Pancreas (tissue), 10 donors: ENCODE measurements at regions of chr2 and their contacts with region 1.

Region 1: GRCh38 chr2:45224321-45224992 is 215.2 kb upstream of the SIX2 start:
- DNase-seq: no peak
- ATAC-seq: no peak
- H3K4me3 ChIP-seq: no peak overlapping the region
- H3K27ac ChIP-seq: no peak overlapping the region
- H3K4me1 ChIP-seq: no peaks in the 10 kb centered on the region
- H3K27me3 ChIP-seq: no peaks in the 10 kb centered on the region
- CTCF ChIP-seq: no peak

Region 2: DNA sequence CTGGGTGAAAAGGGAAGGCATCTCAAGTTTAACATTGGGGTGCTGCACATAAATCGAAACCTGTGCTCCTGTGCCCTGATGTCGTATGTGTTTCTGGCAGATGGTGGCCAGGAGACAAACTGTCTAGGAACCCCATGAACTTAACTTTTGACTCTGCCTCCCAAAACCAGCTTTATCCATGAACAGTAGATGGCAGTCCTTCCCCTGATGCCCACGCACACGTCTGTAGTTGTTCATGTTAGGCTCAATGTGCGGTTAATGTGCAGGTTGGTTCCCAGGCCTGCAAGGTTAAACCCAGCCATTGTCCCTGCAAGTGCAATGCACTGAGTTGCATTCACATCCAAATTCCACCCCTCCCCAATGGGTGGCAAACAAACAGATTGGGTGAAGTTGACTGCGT is 327.1 kb before region 1 on chr2:
- intact Hi-C with region 1: no loop called
- DNase-seq: no peak
- ATAC-seq: no peak
- H3K4me3 ChIP-seq: no peak overlapping the region
- H3K27ac ChIP-seq: no peak overlapping the region
- H3K4me1 ChIP-seq: no peaks in the 10 kb centered on the region
- H3K27me3 ChIP-seq: no peaks in the 10 kb centered on the region
- CTCF ChIP-seq: no peak

Region 3: GRCh38 chr2:45278365-45279078 is 54.1 kb after region 1 on chr2:
- intact Hi-C with region 1: loop called in 1 of 3 experiments (anchors 2 kb)
- DNase-seq: no peak
- ATAC-seq: no peak
- H3K4me3 ChIP-seq: no peak overlapping the region
- H3K27ac ChIP-seq: no peak overlapping the region
- H3K4me1 ChIP-seq: peaks cover 22 to 36% (median 30%) of the 10 kb centered on the region in 3 donors
- H3K27me3 ChIP-seq: no peaks in the 10 kb centered on the region
- CTCF ChIP-seq: no peak